Psoas muscle (tissue), 8 donors: ENCODE measurements at regions of chr1 and their contacts with region 1.

Region 1: GRCh38 chr1:15272009-15272788 is 25.2 kb downstream of the FHAD1 start:
- DNase-seq: peak in 1 of 2 donors; percentile 33
- ATAC-seq: peak in 3 of 4 donors; percentile 45 to 60 (median 58)
- H3K4me3 ChIP-seq: no peak overlapping the region
- H3K27ac ChIP-seq: no peak overlapping the region
- H3K4me1 ChIP-seq: no peaks in the 10 kb centered on the region
- H3K27me3 ChIP-seq: peaks cover 0 to 33% (median 0%) of the 10 kb centered on the region in 3 donors
- CTCF ChIP-seq: peak; percentile 56

Region 2: DNA sequence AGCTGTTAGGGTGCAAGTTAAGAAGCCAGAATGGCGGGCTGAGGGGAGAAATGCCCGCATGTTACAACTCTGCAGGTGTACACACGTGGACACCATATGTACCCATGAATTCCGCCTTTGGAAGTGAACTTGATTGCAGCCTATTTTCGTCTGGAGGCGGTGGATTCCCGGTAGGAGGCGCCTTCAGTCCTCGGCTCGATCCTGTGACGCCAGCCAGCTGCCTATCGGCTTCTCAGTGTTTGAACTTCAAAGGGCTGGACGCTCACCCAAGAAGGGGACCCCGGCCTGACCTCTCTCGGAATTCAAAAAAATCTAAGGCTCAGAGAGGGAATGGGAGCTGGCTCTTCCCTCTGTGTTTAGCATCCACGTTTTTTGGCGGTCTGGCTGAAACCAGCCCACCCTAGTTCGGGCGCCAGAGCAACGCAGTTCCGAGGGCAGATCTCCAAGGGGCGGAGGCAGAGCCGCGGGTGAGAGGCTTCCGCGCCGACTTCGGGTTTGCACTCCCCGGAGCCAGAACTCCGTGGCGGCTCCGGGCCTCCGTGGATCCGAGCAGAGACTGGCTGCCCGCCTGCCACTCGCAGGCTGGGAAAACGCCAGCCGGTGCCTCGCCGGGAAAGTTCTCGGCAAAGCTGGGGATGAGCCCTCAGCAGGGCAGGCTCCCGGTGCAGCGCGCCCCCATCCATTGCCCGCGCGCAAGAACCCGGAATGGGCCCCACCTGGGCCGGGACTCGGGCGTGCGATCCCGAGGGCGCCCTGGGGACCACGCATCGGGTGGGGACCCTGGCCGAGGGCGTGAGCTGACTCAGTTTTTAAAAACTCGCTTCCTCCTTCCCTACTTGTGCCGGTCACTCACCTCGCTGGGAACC is 119.6 kb before region 1 on chr1:
- intact Hi-C with region 1: loop called in 1 of 2 experiments (anchors 1 kb)
- DNase-seq: peak; percentile 76 to 77
- ATAC-seq: peak; percentile 46 to 74 (median 55)
- H3K4me3 ChIP-seq: peak overlapping the region; percentile 61
- H3K27ac ChIP-seq: peak overlapping the region; percentile 63
- H3K4me1 ChIP-seq: no peaks in the 10 kb centered on the region
- H3K27me3 ChIP-seq: peaks cover 0 to 52% (median 7%) of the 10 kb centered on the region in 3 donors
- CTCF ChIP-seq: peak; percentile 45